ENCODE measurements at regions of chr10 and their contacts with region 1.

Region 1: DNA sequence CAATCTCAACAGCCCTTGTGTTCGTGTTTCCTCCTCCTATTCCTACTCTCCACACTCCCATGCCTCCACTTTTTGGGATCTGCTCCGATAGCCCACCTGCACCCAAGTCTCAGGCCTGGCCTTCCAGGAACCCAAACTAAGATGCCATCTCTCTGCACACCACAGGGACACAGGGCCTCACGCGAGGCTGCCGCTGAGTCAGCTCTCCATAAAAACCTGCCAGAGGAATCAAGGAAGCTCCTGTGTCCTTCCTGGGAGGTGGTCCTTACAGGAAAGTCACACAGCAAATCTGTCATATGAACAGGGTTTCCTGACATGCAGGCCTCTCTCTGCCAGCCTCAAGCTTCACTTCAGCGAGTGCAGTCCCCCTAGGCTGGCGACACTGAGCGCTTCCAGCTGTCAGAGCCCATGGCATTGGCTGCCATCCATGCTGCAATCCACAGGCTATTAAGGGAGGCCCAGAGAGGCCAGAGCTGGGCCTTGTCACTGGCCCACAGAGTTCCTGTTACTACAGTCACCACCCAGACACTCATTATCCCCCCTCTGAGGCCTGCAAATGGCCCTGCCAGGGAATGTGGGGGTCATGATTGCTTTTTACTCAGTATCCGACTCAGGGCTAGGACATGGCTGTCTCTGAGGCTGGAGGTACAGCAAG is 151.4 kb downstream of the OAT start:
- DNase-seq: peak in 1 of 5 donors; percentile 54
- ATAC-seq: peak; percentile 47 to 88 (median 76)
- H3K4me3 ChIP-seq: no peak overlapping the region
- H3K27ac ChIP-seq: no peak overlapping the region
- H3K4me1 ChIP-seq: peaks cover 0 to 14% (median 0%) of the 10 kb centered on the region in 12 donors
- H3K27me3 ChIP-seq: no peaks in the 10 kb centered on the region
- CTCF ChIP-seq: no peak
- POLR2A ChIP-seq: no peak

Region 2: GRCh38 chr10:123897146-123897545 is 370.2 kb before region 1 on chr10:
- intact Hi-C with region 1: no loop called
- DNase-seq: no peak
- ATAC-seq: no peak
- H3K4me3 ChIP-seq: no peak overlapping the region
- H3K27ac ChIP-seq: no peak overlapping the region
- H3K4me1 ChIP-seq: no peaks in the 10 kb centered on the region
- H3K27me3 ChIP-seq: peaks cover 0 to 24% (median 3%) of the 10 kb centered on the region in 9 donors
- CTCF ChIP-seq: peak in 3 of 12 donors; percentile 27 to 34 (median 28)
- POLR2A ChIP-seq: no peak

Region 3: GRCh38 chr10:123994417-123995081 is 272.8 kb before region 1 on chr10:
- intact Hi-C with region 1: loop called in 9 of 10 experiments (anchors 1 to 10 kb)
- DNase-seq: peak; percentile 80 to 93 (median 85)
- ATAC-seq: peak; percentile 77 to 88 (median 82)
- H3K4me3 ChIP-seq: peak overlapping the region in 7 of 12 donors; percentile 5 to 35 (median 20)
- H3K27ac ChIP-seq: no peak overlapping the region
- H3K4me1 ChIP-seq: peaks cover 0 to 45% (median 14%) of the 10 kb centered on the region in 12 donors
- H3K27me3 ChIP-seq: peaks cover 15 to 56% (median 41%) of the 10 kb centered on the region in 9 donors
- CTCF ChIP-seq: peak; percentile 97 to 100 (median 99)
- POLR2A ChIP-seq: no peak

Region 4: DNA sequence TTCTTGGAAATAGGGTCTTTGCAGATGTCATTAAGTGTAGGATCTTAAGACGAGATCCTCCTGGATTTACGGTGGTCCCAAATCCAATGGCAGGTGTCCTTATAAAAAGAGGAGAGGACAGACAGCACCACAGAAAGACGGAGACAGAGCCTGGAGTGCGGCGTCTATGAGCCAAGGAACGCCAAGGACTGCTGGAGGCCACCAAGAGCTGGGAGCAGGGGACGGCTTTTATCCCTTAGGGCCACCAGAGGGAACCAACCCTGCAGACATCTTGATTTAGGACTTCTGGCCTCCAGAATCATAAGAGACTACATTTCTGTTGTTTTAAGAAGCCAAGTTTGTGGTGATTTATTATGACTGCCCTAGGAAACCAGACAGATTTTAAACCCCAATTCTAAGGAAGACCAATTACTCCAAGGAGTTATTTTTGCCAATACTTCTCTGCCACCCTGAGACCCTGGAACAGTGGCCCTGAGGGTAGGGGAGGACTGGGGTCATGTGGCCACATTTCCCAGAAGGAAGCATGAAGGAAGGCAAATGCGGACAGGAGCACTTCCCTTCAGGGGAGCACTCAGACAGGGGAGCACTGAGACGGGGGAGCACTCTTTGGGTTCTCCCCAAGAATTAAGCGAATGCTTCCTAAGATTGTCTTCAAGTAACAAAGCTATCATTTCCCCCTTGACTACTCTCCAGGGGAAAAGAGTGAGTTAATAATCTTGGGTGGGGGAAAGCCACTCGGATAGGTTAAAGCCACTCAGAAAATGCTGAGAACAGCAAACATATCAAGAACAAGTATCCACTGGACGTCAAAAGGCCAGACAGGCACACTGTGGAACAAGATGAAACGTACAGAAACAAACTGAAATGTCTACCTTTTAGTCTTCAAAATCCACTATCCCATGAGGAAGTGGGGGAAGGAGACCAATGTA is 241.4 kb before region 1 on chr10:
- intact Hi-C with region 1: loop called in 2 of 10 experiments (anchors 10 kb)
- DNase-seq: peak in 2 of 5 donors; percentile 17 to 54
- ATAC-seq: peak in 2 of 4 donors; percentile 64 to 73
- H3K4me3 ChIP-seq: no peak overlapping the region
- H3K27ac ChIP-seq: no peak overlapping the region
- H3K4me1 ChIP-seq: peaks cover 0 to 4% (median 0%) of the 10 kb centered on the region in 12 donors
- H3K27me3 ChIP-seq: peaks cover 0 to 12% (median 0%) of the 10 kb centered on the region in 9 donors
- CTCF ChIP-seq: peak; percentile 30 to 57 (median 39)
- POLR2A ChIP-seq: no peak

Region 5: GRCh38 chr10:124378881-124379471 is 111.6 kb after region 1 on chr10:
- intact Hi-C with region 1: loop called in 2 of 10 experiments (anchors 10 kb)
- DNase-seq: no peak
- ATAC-seq: no peak
- H3K4me3 ChIP-seq: no peak overlapping the region
- H3K27ac ChIP-seq: no peak overlapping the region
- H3K4me1 ChIP-seq: no peaks in the 10 kb centered on the region
- H3K27me3 ChIP-seq: peaks cover 0 to 30% (median 0%) of the 10 kb centered on the region in 9 donors
- CTCF ChIP-seq: no peak
- POLR2A ChIP-seq: no peak